Dendritic cell treated with granulocyte-macrophage colony-stimulating factor and Interleukin-4, amounts not matched to agents 40 ng/mL and 50 ng/mL, for 4 days (primary cell): ENCODE measurements at regions of chr14 and their contacts with region 1.

Region 1: GRCh38 chr14:65222440-65222858 is 120.1 kb upstream of the MAX start:
- H3K4me3 Mint-ChIP-seq: no peak overlapping the region
- H3K27ac Mint-ChIP-seq: no peak overlapping the region
- H3K4me1 Mint-ChIP-seq: peaks cover 24% of the 10 kb centered on the region
- H3K27me3 Mint-ChIP-seq: peaks cover 15% of the 10 kb centered on the region

Region 2: GRCh38 chr14:65312859-65313258 is 90.4 kb after region 1 on chr14:
- intact Hi-C with region 1: no loop called
- H3K4me3 Mint-ChIP-seq: no peak overlapping the region
- H3K27ac Mint-ChIP-seq: no peak overlapping the region
- H3K4me1 Mint-ChIP-seq: no peaks in the 10 kb centered on the region
- H3K27me3 Mint-ChIP-seq: peaks cover 41% of the 10 kb centered on the region

Region 3: DNA sequence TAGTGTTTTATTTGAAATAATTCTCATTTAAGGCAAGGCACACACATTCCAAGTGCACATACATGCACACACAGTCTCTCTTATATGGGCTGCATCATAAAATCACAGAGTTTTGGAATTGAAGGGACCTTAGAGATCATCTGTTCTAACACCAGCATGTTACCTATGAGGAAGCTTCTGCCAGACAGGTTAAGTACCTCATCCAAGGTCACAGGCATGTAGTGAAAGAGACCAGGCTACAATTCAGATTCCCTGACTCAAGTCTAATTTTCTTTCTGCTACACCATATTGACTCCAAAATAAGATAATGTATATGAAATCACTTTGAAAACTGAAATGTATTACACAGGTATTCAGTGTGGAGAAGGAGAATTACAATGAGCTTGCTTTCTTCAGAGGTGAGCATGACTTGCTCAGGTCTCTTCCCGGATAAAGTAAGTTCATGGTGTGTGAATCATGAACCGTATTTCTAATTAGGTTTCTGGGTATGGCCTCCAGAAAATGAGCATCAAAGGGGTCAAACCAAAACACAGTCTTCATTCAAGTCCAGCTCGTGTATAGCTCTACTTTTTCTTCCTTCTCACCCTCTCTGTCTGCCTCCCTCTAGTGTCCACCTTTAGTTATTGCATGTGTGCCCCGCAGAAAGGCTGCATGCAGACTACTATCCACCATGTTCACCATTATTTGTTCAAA is 602.0 kb after region 1 on chr14:
- intact Hi-C with region 1: loop called (anchors 2 kb)
- H3K4me3 Mint-ChIP-seq: no peak overlapping the region
- H3K27ac Mint-ChIP-seq: no peak overlapping the region
- H3K4me1 Mint-ChIP-seq: no peaks in the 10 kb centered on the region
- H3K27me3 Mint-ChIP-seq: peaks cover 2% of the 10 kb centered on the region